Activated T-helper 1 cell treated with anti-CD3 and anti-CD28 coated beads, Interleukin-12 subunit alpha, Interleukin-12 subunit beta, Interleukin-2, Interleukin-4 antibody, amounts not matched to agents 30 ng/mL and 10 ng/mL and 1 ng/mL, durations not matched to agents 14 hours and 24 hours and 36 hours (primary cell): ENCODE measurements at regions of chr2 and their contacts with region 1.

Region 1: DNA sequence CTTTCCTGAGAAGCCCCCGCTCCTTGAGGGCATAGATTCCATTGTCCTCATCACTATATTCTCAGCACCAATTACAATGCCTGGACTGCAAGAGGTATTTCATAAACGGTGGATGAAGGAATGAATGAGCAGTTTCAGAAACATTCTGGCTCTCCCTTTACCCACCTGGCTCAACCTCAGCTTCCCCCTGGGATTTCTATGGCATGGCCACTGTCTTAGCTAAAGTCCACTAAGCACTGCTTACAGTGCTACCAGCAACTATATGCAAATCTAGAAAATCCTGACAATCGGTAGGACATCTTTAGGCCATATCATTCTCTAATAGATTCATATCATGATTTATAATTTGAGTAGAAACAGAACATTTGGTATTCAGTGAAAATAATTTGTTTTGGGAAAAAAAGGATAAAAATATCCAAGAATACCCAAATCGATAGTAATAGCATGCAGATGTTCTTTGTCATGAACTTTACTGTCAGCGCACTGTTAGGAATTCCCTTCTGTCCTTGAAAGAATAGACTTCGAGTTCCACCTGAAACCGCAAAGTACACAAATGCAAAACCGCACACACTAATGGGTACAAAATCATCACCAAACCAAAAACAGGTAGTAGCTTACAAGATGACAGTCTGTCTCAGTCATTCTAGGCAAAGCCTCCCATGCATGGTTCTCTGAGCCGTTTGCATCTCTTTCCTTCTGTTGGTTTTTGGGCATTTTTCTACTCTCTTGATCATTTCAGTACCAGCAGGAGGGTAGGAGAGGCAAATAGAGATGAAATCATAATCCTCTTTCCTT is 303.6 kb upstream of the ID2 start:
- DNase-seq: no peak
- H3K4me3 Mint-ChIP-seq: no peak overlapping the region
- H3K27ac Mint-ChIP-seq: peak overlapping the region; percentile 15
- H3K4me1 Mint-ChIP-seq: peaks cover 21% of the 10 kb centered on the region
- H3K27me3 Mint-ChIP-seq: peaks cover 5% of the 10 kb centered on the region

Region 2: DNA sequence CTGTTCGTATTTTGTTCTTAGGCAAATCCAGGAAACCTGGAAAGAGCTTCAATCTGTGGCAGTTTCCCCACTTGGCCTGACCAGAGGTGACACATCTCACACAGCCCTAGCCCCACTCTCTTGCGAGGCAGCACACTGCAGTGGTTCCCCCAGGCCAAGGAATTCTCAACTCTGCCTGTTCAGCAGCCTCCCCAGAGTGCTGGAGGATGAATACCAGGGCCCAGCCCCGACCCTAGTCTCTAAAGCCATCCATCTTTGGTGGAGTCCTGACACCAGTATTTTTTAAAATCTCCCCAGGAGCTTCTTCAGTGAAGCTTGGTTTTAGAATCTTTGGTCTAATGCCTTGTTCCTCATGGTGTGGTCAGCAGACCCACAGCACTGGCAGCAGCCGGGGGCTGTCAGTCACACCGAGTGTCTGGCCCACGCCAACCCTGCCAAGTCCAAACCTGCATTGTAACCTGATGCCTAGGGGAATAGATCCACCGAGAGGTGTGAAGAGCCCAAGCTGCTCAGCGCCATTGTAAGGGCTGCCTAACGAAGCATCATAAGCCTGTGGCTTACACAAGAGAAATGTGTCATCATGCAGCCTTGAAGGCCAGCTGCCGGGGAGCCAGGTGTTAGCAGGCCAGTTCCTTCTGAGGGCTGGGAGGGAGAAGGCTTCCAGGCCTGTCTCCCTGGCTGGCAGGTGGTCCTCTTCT is 125.1 kb before region 1 on chr2:
- intact Hi-C with region 1: loop called (anchors 5 kb)
- DNase-seq: no peak
- H3K4me3 Mint-ChIP-seq: no peak overlapping the region
- H3K27ac Mint-ChIP-seq: no peak overlapping the region
- H3K4me1 Mint-ChIP-seq: peaks cover 30% of the 10 kb centered on the region
- H3K27me3 Mint-ChIP-seq: peaks cover 15% of the 10 kb centered on the region

Region 3: DNA sequence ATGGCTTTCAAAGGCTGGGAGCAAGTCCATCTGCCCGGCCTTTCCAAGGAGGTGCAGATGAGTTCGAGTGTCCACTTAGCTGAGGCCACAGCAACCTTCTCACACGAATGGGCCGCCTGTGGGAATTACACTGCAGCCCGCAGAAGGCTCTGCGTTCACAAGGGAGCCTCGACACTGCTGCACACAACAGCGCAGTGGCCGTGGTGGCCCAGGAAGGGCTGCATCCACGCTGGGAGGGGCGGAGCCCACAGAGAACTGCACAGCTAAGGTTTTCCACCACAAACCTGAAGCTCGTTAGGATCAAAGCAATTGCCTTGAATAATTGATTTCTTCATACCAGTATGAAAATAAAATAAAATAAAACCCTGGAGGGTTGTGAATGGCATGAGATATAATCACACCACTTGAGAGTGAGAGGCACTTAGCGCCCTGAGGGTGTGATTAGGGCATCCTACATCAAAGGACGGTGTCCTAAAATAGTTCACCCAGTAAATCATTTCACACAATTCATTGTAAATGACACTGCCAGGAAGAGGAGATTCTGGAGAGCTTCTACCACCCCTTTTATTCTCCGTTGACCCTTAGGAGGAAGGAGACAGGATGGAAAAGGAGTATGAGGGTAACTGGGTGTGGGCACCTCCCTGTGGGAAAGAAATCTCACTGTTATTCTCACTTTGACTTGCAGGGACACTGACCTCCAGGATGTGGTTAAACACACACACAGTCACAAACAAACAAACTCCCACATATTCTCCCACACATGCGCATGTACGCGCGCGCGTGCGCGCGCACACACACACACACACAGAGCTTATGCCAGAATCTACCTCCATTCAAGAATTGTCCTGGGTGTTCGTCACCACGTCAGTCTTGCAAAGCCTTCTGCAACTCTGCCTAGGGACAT is 47.0 kb after region 1 on chr2:
- intact Hi-C with region 1: loop called (anchors 1 kb)
- DNase-seq: no peak
- H3K4me3 Mint-ChIP-seq: no peak overlapping the region
- H3K27ac Mint-ChIP-seq: peak overlapping the region; percentile 80
- H3K4me1 Mint-ChIP-seq: peaks cover 32% of the 10 kb centered on the region
- H3K27me3 Mint-ChIP-seq: no peaks in the 10 kb centered on the region

Region 4: GRCh38 chr2:8681786-8682692 is 303.8 kb after region 1 on chr2 and contains the start of gene ID2:
- intact Hi-C with region 1: no loop called
- DNase-seq: peak; percentile 99
- H3K4me3 Mint-ChIP-seq: peak within 1 kb of the TSS; percentile 99
- H3K27ac Mint-ChIP-seq: peak within 1 kb of the TSS; percentile 97
- H3K4me1 Mint-ChIP-seq: peaks cover 41% of the 10 kb centered on the region
- H3K27me3 Mint-ChIP-seq: peaks cover 14% of the 10 kb centered on the region
- total RNA-seq, gene ID2: 301 and 306 TPM in 2 replicates

Region 5: DNA sequence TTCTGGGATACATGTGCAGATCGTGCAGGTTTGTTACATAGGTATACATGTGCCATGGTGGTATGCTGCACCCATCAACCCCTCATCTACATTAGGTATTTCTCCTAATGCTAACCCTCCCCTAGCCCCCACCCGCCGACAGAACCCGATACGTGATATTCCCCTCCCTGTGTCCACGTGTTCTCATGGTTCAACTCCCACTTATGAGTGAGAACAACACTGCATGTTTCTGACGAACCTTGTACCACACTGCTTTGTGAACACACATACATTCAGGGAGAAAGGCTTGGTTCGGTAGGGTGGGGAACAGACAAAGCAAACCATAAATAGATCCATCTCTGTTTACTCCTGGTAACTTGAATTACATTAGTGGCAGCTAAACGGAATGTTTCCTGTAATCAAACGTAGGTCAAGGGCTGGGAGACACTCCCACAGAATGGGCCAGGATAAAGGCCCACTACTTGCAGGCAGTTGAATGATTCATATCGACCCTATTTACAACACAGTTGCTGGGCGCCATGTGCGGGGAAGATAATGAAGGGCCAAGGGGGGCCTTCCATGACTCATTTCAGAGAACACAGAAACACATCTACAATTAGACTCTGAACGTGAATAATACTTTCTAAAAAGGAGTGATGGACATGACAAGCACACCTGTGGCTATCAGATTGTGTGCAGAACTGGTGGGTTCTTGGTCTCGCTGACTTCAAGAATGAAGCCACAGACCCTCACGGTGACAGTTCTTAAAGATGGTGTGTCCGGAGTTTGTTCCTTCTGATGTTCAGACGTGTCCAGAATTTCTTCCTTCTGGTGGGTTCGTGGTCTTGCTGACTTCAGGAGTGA is 516.0 kb after region 1 on chr2:
- intact Hi-C with region 1: no loop called
- DNase-seq: no peak
- H3K4me3 Mint-ChIP-seq: no peak overlapping the region
- H3K27ac Mint-ChIP-seq: no peak overlapping the region
- H3K4me1 Mint-ChIP-seq: no peaks in the 10 kb centered on the region
- H3K27me3 Mint-ChIP-seq: peaks cover 3% of the 10 kb centered on the region